ENCODE measurements at regions of chr11 and their contacts with region 1.

Region 1: GRCh38 chr11:40514124-40514523 is 945.3 kb downstream of the LRRC4C start:
- DNase-seq: peak in 1 of 6 donors; percentile 8
- ATAC-seq: peak in 3 of 4 donors; percentile 54 to 65 (median 61)
- H3K4me3 ChIP-seq: no peak overlapping the region
- H3K27ac ChIP-seq: no peak overlapping the region
- H3K4me1 ChIP-seq: peaks cover 0 to 6% (median 0%) of the 10 kb centered on the region in 3 donors
- H3K27me3 ChIP-seq: no peaks in the 10 kb centered on the region
- CTCF ChIP-seq: no peak

Region 2: DNA sequence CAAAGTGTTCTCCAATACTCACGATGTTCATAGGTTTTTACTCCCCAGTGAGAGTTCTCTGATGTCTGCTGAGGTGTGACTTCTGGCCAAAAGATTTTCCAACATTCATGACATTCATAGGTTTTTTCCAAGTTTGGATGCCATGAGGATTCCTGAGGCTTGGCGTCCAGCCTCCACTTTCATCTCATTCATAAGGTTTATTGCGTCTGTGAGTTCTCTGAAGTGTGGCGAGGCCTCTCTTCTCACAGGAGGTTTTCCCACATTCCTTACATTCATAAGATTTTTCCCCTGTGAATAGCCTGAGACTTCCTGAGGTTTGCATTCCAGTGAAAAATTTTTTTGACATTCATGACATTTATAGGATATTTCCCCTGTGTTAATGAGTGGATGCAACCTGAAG is 68.7 kb before region 1 on chr11:
- intact Hi-C with region 1: loop called in 1 of 3 experiments (anchors 10 kb)
- DNase-seq: no peak
- ATAC-seq: no peak
- H3K4me3 ChIP-seq: no peak overlapping the region
- H3K27ac ChIP-seq: no peak overlapping the region
- H3K4me1 ChIP-seq: no peaks in the 10 kb centered on the region
- H3K27me3 ChIP-seq: no peaks in the 10 kb centered on the region
- CTCF ChIP-seq: no peak

Region 3: DNA sequence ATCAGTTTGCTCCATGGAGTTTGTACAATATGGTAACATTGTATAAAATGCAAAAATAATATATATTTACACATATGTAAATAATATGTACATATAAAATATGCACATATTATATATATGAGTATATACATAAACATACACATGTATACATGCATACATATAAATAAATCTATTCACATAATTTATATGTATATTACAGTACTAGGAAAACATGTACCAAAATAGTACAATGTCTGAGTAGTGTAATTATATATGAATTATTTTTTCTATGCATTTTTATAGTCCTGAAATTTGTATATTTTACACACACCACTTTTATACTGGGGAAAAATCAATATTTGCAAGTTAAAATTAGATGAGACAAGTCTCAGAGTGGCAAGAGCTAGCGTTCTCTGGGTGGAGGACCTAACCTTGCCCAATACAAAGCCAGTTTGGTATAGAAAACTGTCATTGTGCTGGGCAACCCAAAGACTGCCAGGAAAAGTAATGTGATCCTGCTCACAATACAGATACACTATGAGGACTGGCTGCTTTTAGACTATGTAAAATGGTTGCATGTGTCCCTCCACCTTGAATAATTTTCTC is 55.9 kb after region 1 on chr11:
- intact Hi-C with region 1: no loop called
- DNase-seq: no peak
- ATAC-seq: no peak
- H3K4me3 ChIP-seq: no peak overlapping the region
- H3K27ac ChIP-seq: no peak overlapping the region
- H3K4me1 ChIP-seq: no peaks in the 10 kb centered on the region
- H3K27me3 ChIP-seq: no peaks in the 10 kb centered on the region
- CTCF ChIP-seq: no peak

Region 4: DNA sequence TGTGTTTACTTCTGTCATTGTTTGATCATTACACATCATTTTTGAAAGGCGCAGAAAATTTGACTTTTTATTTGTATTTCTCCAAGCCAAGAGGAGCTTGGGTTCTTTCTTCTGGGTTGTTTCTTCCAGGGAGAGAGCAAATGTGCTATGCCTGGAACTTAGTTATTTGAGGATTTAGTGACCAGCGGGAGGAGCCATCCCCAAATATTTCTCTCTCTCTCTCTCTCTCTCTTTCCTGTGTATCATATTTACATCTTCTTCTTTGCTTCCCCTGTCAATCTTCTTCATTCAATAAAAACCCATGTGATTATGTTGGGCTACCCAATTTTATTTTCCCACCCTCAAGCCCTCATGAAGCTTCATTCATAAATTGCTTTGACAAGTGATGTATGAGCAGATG is 410.8 kb after region 1 on chr11:
- intact Hi-C with region 1: no loop called
- DNase-seq: no peak
- ATAC-seq: no peak
- H3K4me3 ChIP-seq: no peak overlapping the region
- H3K27ac ChIP-seq: no peak overlapping the region
- H3K4me1 ChIP-seq: no peaks in the 10 kb centered on the region
- H3K27me3 ChIP-seq: no peaks in the 10 kb centered on the region
- CTCF ChIP-seq: no peak

Measured in pancreas (tissue), 10 donors.